ENCODE measurements at regions of chr2 and their contacts with region 1.

Region 1: GRCh38 chr2:36397728-36398413 is 42.3 kb downstream of the CRIM1 start:
- DNase-seq: no peak
- H3K4me3 ChIP-seq: no peak overlapping the region
- H3K4me3 Mint-ChIP-seq: no peak overlapping the region
- H3K27ac Mint-ChIP-seq: no peak overlapping the region
- H3K4me1 ChIP-seq: peaks cover 54% of the 10 kb centered on the region
- H3K4me1 Mint-ChIP-seq: peaks cover 10% of the 10 kb centered on the region
- H3K27me3 ChIP-seq: no peaks in the 10 kb centered on the region
- H3K27me3 Mint-ChIP-seq: no peaks in the 10 kb centered on the region
- CTCF ChIP-seq: no peak

Region 2: GRCh38 chr2:35614640-35615039 is 783.2 kb before region 1 on chr2:
- CTCF ChIA-PET with region 1: no interaction called
- POLR2A ChIA-PET with region 1: no interaction called
- intact Hi-C with region 1: no loop called
- DNase-seq: no peak
- H3K4me3 ChIP-seq: no peak overlapping the region
- H3K4me3 Mint-ChIP-seq: no peak overlapping the region
- H3K27ac Mint-ChIP-seq: no peak overlapping the region
- H3K4me1 ChIP-seq: no peaks in the 10 kb centered on the region
- H3K4me1 Mint-ChIP-seq: no peaks in the 10 kb centered on the region
- H3K27me3 ChIP-seq: no peaks in the 10 kb centered on the region
- H3K27me3 Mint-ChIP-seq: no peaks in the 10 kb centered on the region
- CTCF ChIP-seq: no peak

Region 3: DNA sequence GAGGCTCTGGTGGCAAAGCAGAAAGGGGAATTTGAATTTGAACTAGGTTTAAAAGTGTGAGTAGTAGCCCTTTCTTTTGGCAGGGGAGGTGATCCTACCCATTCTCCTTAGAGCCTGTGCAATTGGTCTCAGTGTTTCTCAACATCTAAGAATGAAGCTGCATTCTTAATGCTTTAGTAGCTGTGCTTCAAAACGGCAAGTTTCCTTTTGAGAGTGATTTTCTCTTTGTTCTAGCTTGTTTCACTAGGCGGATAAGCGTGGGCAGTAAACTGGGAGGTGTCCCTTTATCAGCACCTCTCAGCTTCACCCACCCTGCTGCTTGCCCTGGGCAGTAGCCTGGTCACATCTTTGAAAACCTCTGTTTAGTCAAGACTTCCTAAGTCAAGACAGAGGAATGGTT is 35.6 kb before region 1 on chr2:
- CTCF ChIA-PET with region 1: no interaction called
- POLR2A ChIA-PET with region 1: no interaction called
- intact Hi-C with region 1: loop called (anchors 2 kb)
- DNase-seq: no peak
- H3K4me3 ChIP-seq: no peak overlapping the region
- H3K4me3 Mint-ChIP-seq: peak overlapping the region; percentile 5
- H3K27ac Mint-ChIP-seq: peak overlapping the region; percentile 1
- H3K4me1 ChIP-seq: peaks cover 83% of the 10 kb centered on the region
- H3K4me1 Mint-ChIP-seq: peaks cover 75% of the 10 kb centered on the region
- H3K27me3 ChIP-seq: no peaks in the 10 kb centered on the region
- H3K27me3 Mint-ChIP-seq: no peaks in the 10 kb centered on the region
- CTCF ChIP-seq: no peak